ENCODE measurements at regions of chr19 and their contacts with region 1.

Region 1: DNA sequence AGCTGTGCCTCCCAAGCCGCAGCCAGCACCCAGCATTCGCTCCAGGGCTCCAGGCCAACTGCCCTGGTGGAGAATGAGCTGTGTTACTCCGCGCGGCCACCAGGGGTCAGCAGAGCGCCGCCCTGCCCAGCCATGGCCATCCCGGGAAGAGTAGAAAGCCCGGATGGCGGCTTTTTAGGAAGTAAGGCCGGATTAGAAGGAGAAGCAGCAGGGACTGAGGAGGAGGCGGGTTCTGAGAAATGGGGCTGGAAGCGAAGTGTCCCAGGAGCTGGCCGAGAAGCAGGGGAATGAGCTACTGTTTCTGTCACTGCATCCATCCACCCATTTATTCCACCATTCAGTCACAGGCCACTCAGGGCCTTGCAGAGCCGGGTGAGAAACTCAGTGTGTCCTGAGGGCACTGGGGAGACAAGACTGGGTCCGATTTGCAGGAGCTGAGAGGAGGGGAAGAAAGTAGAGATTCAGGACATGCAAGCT is 6.6 kb upstream of the NPAS1 start:
- DNase-seq: peak; percentile 49 to 97
- H3K4me3 ChIP-seq: no peak overlapping the region
- H3K27ac ChIP-seq: no peak overlapping the region
- H3K4me1 ChIP-seq: peaks cover 0 to 3% (median 0%) of the 10 kb centered on the region in 4 experiments; a peak in 1 of 7 replicates
- H3K27me3 ChIP-seq: no peaks in the 10 kb centered on the region
- CTCF ChIP-seq: peak; percentile 92 to 98 (median 95)
- EP300 ChIP-seq: no peak; a peak in 1 of 3 replicates
- POLR2A ChIP-seq: no peak
- RAD21 ChIP-seq: peak; percentile 94 to 98

Region 2: GRCh38 chr19:47002107-47002766 is 10.8 kb before region 1 on chr19:
- CTCF ChIA-PET with region 1: interaction called, 43 read pairs
- POLR2A ChIA-PET with region 1: interaction called, 7 read pairs
- DNase-seq: no peak
- H3K4me3 ChIP-seq: no peak overlapping the region
- H3K27ac ChIP-seq: no peak overlapping the region
- H3K4me1 ChIP-seq: peaks cover 0 to 5% (median 0%) of the 10 kb centered on the region in 4 experiments; a peak in 2 of 7 replicates
- H3K27me3 ChIP-seq: no peaks in the 10 kb centered on the region
- CTCF ChIP-seq: peak in 2 of 3 experiments; percentile 24 to 35; a peak in 3 of 4 replicates
- EP300 ChIP-seq: no peak
- POLR2A ChIP-seq: no peak
- RAD21 ChIP-seq: peak in 1 of 2 experiments; percentile 26; a peak in 2 of 4 replicates

Region 3: DNA sequence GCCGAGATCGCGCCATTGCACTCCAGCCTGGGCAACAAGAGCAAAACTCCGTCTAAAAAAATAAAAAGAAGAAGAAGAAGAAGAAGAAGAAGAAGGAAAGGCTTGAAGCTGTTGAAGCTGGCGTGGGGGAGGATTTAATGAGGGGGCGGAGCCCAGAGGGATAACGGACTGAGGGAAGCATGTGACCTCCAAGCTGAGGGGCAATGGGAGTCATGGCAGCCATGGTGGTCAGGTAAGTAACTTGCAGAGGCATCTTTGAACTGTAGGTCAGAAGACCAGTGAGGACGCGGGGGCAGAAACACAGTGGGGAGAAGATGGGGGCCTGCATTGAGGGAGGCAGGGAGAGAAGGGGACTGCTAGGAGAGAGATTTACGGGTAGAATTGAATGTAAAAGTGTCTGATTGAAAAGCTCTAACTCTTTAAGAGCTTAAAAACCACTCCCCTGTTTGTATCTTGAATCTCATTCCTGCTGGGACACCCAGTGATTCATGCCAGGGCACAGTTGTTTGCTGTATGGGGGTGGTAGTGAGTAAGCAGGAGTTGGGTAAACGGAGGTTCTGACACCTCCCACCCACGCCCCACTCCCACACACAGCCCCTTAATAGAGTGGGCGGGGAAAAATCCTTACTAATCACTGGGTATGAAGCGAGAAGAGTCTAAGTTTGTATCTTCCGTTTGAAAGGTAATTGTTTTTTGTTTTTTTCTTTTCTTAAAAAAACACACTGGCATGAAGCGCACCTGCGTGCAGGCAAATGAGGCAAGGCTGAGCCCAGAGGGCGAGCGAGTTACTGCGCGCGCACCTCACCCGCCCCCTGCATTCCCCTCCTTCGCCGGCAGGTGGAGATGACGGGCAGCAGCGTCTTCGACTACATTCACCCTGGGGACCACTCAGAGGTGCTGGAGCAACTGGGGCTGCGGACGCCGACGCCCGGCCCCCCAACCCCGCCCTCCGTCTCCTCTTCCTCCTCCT is 22.3 kb after region 1 on chr19:
- CTCF ChIA-PET with region 1: interaction called, 48 read pairs
- POLR2A ChIA-PET with region 1: interaction called, 10 read pairs
- DNase-seq: peak in 1 of 2 experiments; percentile 100
- H3K4me3 ChIP-seq: peak overlapping the region; percentile 23 to 65 (median 47); a peak in 7 of 8 replicates
- H3K27ac ChIP-seq: no peak overlapping the region
- H3K4me1 ChIP-seq: peaks cover 3 to 7% (median 6%) of the 10 kb centered on the region in 4 experiments; a peak in 6 of 7 replicates
- H3K27me3 ChIP-seq: no peaks in the 10 kb centered on the region; a peak in 1 of 7 replicates
- CTCF ChIP-seq: peak; percentile 79 to 94 (median 91)
- EP300 ChIP-seq: no peak
- POLR2A ChIP-seq: no peak
- RAD21 ChIP-seq: peak; percentile 61 to 63

Region 4: DNA sequence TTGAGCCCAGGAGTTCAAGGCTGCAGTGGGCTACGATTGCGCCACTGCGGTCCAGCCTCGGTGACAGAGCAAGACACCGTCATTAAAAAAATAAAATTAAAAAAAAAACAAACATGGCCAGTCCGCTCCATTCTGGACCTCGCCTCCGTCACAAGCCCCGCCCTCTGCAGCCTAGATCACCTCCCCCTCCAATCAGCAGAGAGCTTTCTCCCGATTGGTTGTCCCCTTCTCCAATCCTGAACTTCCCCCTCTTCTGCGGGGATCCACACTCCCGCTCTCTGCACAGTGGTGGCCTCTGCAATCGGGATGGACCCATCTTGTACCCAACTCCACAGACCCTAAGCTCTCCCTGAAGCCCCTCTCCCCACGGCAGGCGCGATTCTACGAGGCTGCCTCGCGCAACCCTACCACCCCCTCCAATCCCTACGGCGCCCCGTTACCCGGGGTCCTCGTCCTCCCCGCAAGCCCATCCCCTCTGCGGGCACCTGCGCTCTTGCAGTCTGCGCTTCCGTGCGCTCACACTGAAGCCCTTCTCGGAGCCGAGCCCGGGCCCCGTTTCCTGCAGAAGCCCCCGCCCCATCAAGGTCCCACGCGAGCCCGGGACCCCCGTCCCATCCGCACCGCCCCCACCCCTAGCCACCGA is 34.8 kb after region 1 on chr19:
- CTCF ChIA-PET with region 1: interaction called, 22 read pairs
- POLR2A ChIA-PET with region 1: interaction called, 6 read pairs
- DNase-seq: peak; percentile 63 to 91
- H3K4me3 ChIP-seq: peak overlapping the region; percentile 62 to 88 (median 80)
- H3K27ac ChIP-seq: no peak overlapping the region
- H3K4me1 ChIP-seq: peaks cover 0 to 5% (median 4%) of the 10 kb centered on the region in 4 experiments; a peak in 3 of 7 replicates
- H3K27me3 ChIP-seq: no peaks in the 10 kb centered on the region
- CTCF ChIP-seq: no peak
- EP300 ChIP-seq: no peak
- POLR2A ChIP-seq: no peak; a peak in 1 of 3 replicates
- RAD21 ChIP-seq: no peak

Region 5: GRCh38 chr19:47057328-47057727 is 44.2 kb after region 1 on chr19:
- CTCF ChIA-PET with region 1: interaction called, 16 read pairs
- POLR2A ChIA-PET with region 1: no interaction called
- DNase-seq: no peak
- H3K4me3 ChIP-seq: no peak overlapping the region
- H3K27ac ChIP-seq: no peak overlapping the region
- H3K4me1 ChIP-seq: no peaks in the 10 kb centered on the region
- H3K27me3 ChIP-seq: no peaks in the 10 kb centered on the region
- CTCF ChIP-seq: no peak
- EP300 ChIP-seq: no peak
- POLR2A ChIP-seq: no peak
- RAD21 ChIP-seq: no peak

Region 6: DNA sequence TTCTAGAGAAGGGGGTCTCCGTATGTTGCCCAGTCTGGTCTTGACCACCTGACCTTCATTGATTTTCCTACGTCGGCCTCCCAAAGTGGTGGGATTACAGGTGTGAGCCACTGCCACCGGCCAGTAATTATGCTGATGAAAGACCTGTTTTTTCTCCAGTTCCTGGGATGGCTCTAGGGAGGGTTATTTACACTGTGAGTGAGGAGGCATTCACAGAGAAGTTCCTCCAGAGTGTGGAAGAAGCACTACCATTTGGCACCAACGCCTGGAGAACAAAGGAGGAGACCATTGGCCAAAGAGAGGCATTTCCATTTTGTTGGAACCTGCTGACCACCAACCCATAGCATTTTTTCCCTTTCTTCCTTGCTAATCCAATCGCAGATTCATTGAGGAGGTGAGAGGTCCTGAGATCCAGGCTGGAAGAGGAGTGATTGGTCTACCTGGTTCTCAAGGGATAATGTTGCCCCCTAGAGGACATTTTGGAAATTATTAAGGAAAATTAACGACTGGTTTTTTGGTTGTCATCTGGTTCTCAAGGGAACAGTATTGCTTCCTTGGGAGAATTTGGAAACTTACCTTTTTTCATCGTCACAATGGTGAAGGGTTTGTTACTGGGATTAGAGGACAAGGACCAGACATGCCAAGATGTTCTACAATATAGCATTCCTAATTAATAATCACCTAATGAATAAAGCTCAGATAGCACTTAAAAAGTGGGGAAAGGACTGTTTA is 112.0 kb after region 1 on chr19:
- CTCF ChIA-PET with region 1: interaction called, 14 read pairs
- POLR2A ChIA-PET with region 1: interaction called, 3 read pairs
- DNase-seq: no peak
- H3K4me3 ChIP-seq: no peak overlapping the region
- H3K27ac ChIP-seq: no peak overlapping the region
- H3K4me1 ChIP-seq: peaks cover 0 to 4% (median 1%) of the 10 kb centered on the region in 4 experiments; a peak in 1 of 7 replicates
- H3K27me3 ChIP-seq: no peaks in the 10 kb centered on the region
- CTCF ChIP-seq: peak in 2 of 3 experiments; percentile 63 to 67; a peak in 2 of 4 replicates
- EP300 ChIP-seq: no peak
- POLR2A ChIP-seq: no peak
- RAD21 ChIP-seq: peak; percentile 81 to 84

Measured in H1 (cell line).